SK-N-SH (cell line): ENCODE measurements at regions of chr19 and their contacts with region 1.

Region 1: GRCh38 chr19:54023191-54023590 is 31.8 kb downstream of the CACNG6 start:
- DNase-seq: no peak
- H3K4me3 ChIP-seq: no peak overlapping the region
- H3K27ac ChIP-seq: no peak overlapping the region
- H3K4me1 ChIP-seq: peaks cover 0 to 8% of the 10 kb centered on the region in 2 experiments; a peak in 1 of 4 replicates
- H3K27me3 ChIP-seq: no peaks in the 10 kb centered on the region
- CTCF ChIP-seq: no peak
- EP300 ChIP-seq: no peak
- RAD21 ChIP-seq: no peak

Region 2: DNA sequence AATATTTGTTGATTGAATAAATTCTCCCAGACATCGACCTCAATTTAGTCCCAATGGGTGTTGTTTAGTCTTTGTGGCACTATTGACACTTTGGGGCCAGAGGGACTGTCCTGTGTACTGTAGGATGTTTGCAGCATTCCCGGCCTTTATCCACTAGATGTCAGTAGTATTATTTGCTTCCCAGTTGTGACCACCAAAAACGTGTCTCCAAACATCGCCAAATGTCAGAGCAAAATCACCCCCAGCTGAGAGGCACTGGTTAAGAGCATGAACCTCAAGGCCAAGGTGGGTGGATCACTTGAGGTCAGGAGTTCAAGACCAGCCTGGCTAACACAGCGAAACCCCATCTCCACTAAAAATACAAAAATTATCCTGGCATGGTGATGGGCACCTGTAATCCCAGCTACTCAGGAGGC is 214.5 kb before region 1 on chr19:
- CTCF ChIA-PET with region 1: interaction called, 54 read pairs
- POLR2A ChIA-PET with region 1: no interaction called
- DNase-seq: peak; percentile 49
- H3K4me3 ChIP-seq: peak overlapping the region in 1 of 2 experiments; percentile 52; a peak in 1 of 4 replicates
- H3K27ac ChIP-seq: no peak overlapping the region
- H3K4me1 ChIP-seq: no peaks in the 10 kb centered on the region
- H3K27me3 ChIP-seq: peaks cover 39% of the 10 kb centered on the region
- CTCF ChIP-seq: peak; percentile 79
- EP300 ChIP-seq: no peak
- RAD21 ChIP-seq: peak; percentile 79

Region 3: GRCh38 chr19:53906211-53907192 is 116.7 kb before region 1 on chr19:
- CTCF ChIA-PET with region 1: interaction called, 47 read pairs
- POLR2A ChIA-PET with region 1: no interaction called
- DNase-seq: peak; percentile 85
- H3K4me3 ChIP-seq: peak overlapping the region; percentile 17 to 26; a peak in 2 of 4 replicates
- H3K27ac ChIP-seq: no peak overlapping the region
- H3K4me1 ChIP-seq: peaks cover 0 to 20% of the 10 kb centered on the region in 2 experiments; a peak in 1 of 4 replicates
- H3K27me3 ChIP-seq: peaks cover 26% of the 10 kb centered on the region
- CTCF ChIP-seq: peak; percentile 85
- EP300 ChIP-seq: no peak
- RAD21 ChIP-seq: peak; percentile 73

Region 4: GRCh38 chr19:53994811-53995210 is 28.4 kb before region 1 on chr19:
- CTCF ChIA-PET with region 1: interaction called, 23 read pairs
- POLR2A ChIA-PET with region 1: no interaction called
- DNase-seq: no peak
- H3K4me3 ChIP-seq: no peak overlapping the region
- H3K27ac ChIP-seq: no peak overlapping the region
- H3K4me1 ChIP-seq: peaks cover 10 to 14% of the 10 kb centered on the region in 2 experiments; a peak in 3 of 4 replicates
- H3K27me3 ChIP-seq: peaks cover 5% of the 10 kb centered on the region; the same call in 1 of the 2 replicates
- CTCF ChIP-seq: no peak
- EP300 ChIP-seq: no peak
- RAD21 ChIP-seq: no peak